ENCODE measurements at regions of chr10 and their contacts with region 1.

Region 1: DNA sequence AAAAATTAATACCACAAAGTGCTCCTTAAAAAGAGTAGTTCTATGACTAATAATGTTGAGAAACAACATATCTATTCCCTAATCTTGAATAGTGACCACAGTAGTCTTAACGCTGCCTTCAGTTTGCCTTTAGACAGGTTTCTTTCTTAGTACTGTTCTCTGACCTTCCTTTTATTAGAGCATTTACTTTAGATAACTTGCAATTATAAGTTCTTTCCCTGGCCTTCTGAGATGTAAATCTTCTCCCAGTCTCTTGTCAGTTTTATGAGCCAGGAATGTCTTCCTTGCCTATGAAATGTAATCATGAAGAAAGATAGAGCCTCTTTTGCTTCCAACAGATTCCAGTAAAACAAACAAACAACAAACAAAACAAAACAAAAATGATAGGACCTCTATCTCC is 1119.8 kb upstream of the LRRTM3 start:
- DNase-seq: no peak
- ATAC-seq: no peak
- H3K4me3 ChIP-seq: no peak overlapping the region
- H3K4me3 Mint-ChIP-seq: no peak overlapping the region
- H3K27ac ChIP-seq: no peak overlapping the region
- H3K27ac Mint-ChIP-seq: no peak overlapping the region
- H3K4me1 ChIP-seq: no peaks in the 10 kb centered on the region
- H3K4me1 Mint-ChIP-seq: no peaks in the 10 kb centered on the region
- H3K27me3 ChIP-seq: no peaks in the 10 kb centered on the region
- H3K27me3 Mint-ChIP-seq: no peaks in the 10 kb centered on the region
- CTCF ChIP-seq: no peak

Region 2: DNA sequence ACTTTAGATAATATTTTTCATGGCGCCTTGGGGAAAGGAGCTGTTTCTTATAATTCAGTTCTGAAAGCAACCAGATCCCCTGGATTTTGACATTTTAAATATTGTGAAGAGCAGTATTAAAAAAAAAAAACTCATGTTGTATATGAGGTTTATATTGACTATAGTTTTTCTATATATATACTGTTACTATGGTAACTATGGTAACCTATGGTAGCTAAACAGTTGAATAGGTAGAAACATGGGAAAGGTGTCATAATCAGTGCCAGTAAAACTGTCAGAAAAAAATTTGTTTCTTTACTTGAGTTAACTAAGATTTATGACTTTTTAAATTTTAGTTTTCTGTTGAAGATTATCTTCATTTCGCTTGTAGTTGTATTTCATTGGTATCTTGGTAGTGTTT is 1403.3 kb before region 1 on chr10:
- CTCF ChIA-PET with region 1: no interaction called
- POLR2A ChIA-PET with region 1: no interaction called
- intact Hi-C with region 1: loop called in 1 of 2 experiments (anchors 5 kb)
- DNase-seq: no peak
- ATAC-seq: no peak
- H3K4me3 ChIP-seq: no peak overlapping the region
- H3K4me3 Mint-ChIP-seq: no peak overlapping the region
- H3K27ac ChIP-seq: no peak overlapping the region
- H3K27ac Mint-ChIP-seq: no peak overlapping the region
- H3K4me1 ChIP-seq: no peaks in the 10 kb centered on the region
- H3K4me1 Mint-ChIP-seq: no peaks in the 10 kb centered on the region
- H3K27me3 ChIP-seq: no peaks in the 10 kb centered on the region
- H3K27me3 Mint-ChIP-seq: no peaks in the 10 kb centered on the region
- CTCF ChIP-seq: no peak

Region 3: GRCh38 chr10:65778753-65779152 is 27.2 kb before region 1 on chr10:
- CTCF ChIA-PET with region 1: no interaction called
- POLR2A ChIA-PET with region 1: no interaction called
- intact Hi-C with region 1: no loop called
- DNase-seq: no peak
- ATAC-seq: no peak
- H3K4me3 ChIP-seq: no peak overlapping the region
- H3K4me3 Mint-ChIP-seq: no peak overlapping the region
- H3K27ac ChIP-seq: no peak overlapping the region
- H3K27ac Mint-ChIP-seq: no peak overlapping the region
- H3K4me1 ChIP-seq: no peaks in the 10 kb centered on the region
- H3K4me1 Mint-ChIP-seq: no peaks in the 10 kb centered on the region
- H3K27me3 ChIP-seq: no peaks in the 10 kb centered on the region
- H3K27me3 Mint-ChIP-seq: no peaks in the 10 kb centered on the region
- CTCF ChIP-seq: no peak

Measured in CD8-positive, alpha-beta T cell (primary cell).